Psoas muscle (tissue), 8 donors: ENCODE measurements at regions of chr12 and their contacts with region 1.

Region 1: GRCh38 chr12:7031306-7031705 is 13.0 kb upstream of the LPCAT3 start:
- DNase-seq: no peak
- ATAC-seq: no peak
- H3K4me3 ChIP-seq: no peak overlapping the region
- H3K27ac ChIP-seq: no peak overlapping the region
- H3K4me1 ChIP-seq: no peaks in the 10 kb centered on the region
- H3K27me3 ChIP-seq: no peaks in the 10 kb centered on the region
- CTCF ChIP-seq: no peak

Region 2: DNA sequence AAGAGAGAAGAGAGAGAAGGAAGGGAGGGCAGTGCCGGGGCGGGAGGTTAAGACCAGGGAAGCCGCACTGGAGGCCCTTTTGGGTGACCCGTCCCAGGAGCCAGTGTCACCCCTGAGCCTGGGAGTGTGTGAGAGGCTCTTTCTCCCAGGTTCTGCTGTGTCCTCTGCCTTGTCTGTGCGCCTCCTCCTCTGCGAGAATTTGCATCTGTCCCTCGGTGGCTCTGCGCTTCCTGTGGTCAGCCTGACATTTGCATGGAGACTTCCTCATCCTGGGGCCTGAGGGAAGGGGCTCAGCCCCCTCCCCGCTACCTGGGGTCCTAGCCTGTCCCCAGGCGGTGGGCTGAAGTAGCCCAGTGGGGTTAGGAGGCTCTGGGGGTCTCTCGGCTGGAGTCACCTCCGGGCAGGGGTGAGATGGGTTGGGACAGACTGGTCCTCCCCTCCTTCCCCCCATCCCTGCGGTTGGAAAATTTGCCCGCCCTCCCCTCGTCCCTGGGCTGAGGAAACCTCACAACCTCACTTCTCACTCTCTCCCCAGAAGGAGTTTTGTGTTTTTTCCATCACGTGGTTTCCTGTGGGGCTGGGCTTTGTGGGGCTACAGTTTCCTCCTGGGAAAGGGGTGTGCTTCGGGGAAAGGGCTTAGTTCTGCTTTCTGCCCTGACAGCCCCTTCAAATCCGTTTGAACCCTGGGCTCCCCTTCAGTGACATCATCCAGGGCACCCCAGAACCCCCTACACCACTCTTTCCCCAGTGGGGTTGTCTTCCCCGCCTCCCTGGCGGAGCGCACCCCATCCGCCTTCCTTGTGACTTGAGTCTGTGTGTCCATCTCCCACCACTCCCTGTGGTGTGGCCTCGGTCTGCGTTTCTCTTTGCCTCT is 77.6 kb before region 1 on chr12:
- intact Hi-C with region 1: loop called in 1 of 2 experiments (anchors 5 kb)
- DNase-seq: peak in 1 of 2 donors; percentile 66
- ATAC-seq: peak; percentile 19 to 30 (median 22)
- H3K4me3 ChIP-seq: peak overlapping the region; percentile 50
- H3K27ac ChIP-seq: no peak overlapping the region
- H3K4me1 ChIP-seq: no peaks in the 10 kb centered on the region
- H3K27me3 ChIP-seq: no peaks in the 10 kb centered on the region
- CTCF ChIP-seq: no peak